ENCODE measurements at regions of chr16 and their contacts with region 1.

Region 1: DNA sequence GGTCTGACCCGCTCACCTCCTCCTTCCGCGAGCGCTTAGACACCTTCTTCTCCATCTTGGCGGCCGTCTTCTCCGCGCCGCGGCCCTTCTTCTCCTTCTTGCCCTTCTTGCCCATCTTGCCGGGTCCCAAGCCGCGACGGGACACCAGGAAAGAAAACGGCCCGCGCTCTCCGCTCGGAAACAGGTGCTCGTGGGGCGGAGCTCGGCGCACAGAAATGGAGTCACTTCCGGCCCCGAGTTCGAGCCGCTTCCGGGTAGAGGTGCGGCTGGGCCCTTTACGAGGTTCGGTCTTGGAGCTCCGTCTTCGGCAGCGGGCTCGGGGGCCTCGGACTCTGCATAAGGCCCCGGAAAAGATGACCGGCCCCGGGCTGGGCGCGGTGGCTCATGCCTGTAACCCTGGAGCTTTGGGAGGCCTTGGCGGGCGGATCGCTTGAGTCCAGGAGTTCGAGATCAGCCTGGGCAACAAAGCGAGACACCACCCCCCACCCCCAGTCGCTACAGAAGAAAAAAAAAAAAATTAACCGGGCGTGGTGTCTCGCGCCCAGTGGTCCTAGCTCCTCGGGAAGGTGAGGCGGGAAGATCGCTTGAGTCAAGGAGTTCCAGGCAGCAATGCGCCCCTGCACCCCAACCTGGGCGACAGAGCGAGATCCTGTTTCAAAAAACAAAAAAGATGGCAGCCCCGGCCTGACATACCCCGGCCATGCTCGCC is at the start of gene KLHDC4:
- DNase-seq: peak; percentile 84
- H3K4me3 Mint-ChIP-seq: peak within 1 kb of the TSS; percentile 88
- H3K27ac Mint-ChIP-seq: peak within 1 kb of the TSS; percentile 95
- H3K4me1 Mint-ChIP-seq: peaks cover 24% of the 10 kb centered on the region
- H3K27me3 Mint-ChIP-seq: no peaks in the 10 kb centered on the region
- CTCF ChIP-seq: no peak
- total RNA-seq, gene KLHDC4: 82.9 and 106 TPM in 2 replicates

Region 2: GRCh38 chr16:87160234-87160661 is 605.7 kb before region 1 on chr16:
- CTCF ChIA-PET with region 1: no interaction called
- POLR2A ChIA-PET with region 1: no interaction called
- intact Hi-C with region 1: no loop called
- DNase-seq: no peak
- H3K4me3 Mint-ChIP-seq: no peak overlapping the region
- H3K27ac Mint-ChIP-seq: no peak overlapping the region
- H3K4me1 Mint-ChIP-seq: peaks cover 23% of the 10 kb centered on the region
- H3K27me3 Mint-ChIP-seq: peaks cover 11% of the 10 kb centered on the region
- CTCF ChIP-seq: no peak

Region 3: DNA sequence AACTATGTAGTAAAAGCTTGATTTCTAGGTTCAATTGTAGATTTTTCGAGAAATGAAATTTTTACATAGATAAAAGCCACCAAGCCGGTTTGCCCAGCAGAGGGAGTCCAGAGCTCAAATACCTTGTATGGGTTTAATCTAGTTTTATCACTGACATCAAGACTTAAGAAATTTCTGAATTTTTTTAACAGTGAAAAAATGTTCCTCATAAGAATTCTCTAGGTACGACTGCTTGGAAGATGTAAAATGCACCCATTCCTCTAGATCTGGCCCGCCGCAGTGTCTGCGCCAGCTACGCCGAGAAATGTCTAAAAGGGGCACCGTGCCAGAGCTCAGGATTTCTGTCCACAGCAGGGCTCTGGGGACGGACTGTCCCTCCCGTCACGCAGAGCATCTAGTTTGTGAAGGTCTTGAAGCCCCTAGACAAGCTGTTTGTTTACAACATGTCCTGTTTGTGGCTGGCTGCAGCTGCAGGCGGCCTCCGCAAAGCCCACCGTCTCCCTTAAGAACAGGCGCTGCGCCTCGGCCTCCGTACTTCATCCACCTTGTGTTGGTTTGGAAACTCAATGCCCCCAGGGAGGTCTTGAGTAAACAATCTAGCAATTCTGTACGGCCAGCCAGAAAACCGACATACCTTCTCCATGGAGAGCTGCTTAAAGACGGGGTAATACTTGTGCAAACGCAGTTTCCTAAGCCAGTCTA is 349.0 kb before region 1 on chr16:
- CTCF ChIA-PET with region 1: no interaction called
- POLR2A ChIA-PET with region 1: no interaction called
- intact Hi-C with region 1: no loop called
- DNase-seq: peak; percentile 56
- H3K4me3 Mint-ChIP-seq: no peak overlapping the region
- H3K27ac Mint-ChIP-seq: no peak overlapping the region
- H3K4me1 Mint-ChIP-seq: no peaks in the 10 kb centered on the region
- H3K27me3 Mint-ChIP-seq: no peaks in the 10 kb centered on the region
- CTCF ChIP-seq: peak; percentile 52

Region 4: DNA sequence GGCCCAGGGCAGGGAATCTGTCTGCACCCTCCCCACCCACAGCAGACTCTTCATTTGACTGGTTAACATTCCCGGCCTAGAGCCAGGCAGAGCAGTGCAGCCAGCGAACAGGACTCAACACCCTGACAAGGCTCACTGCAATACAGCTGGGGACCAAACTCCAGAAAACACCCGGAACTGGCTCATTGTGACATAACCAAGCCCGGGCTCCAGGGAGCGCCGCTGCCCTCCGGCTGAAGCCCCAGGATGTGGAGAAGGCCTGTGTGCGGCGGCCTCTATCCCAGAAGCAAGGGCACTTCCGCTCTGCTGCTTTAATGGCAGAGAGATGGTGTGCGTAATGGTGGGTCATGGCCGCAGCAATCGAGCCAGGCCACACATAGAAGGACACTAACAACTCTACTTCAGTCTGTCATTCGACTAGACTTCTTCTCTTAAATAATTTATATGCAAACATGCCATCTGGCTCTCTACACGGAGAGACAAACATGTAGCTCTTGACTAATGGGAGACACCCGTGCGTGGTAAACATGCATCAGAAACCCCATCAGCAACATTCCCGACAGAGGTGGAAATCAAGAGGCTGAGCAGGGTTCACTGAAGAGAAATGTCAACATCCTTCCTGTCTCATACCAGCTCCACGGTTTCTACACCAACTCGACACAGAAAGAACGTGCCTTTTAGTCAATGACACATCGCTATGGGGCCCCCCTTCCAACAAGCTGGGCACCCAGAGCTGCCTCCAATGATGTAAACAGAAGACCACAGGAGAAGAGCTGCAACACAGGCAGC is 18.1 kb before region 1 on chr16:
- CTCF ChIA-PET with region 1: interaction called, 17 read pairs
- POLR2A ChIA-PET with region 1: interaction called, 20 read pairs
- intact Hi-C with region 1: no loop called
- DNase-seq: no peak
- H3K4me3 Mint-ChIP-seq: no peak overlapping the region
- H3K27ac Mint-ChIP-seq: no peak overlapping the region
- H3K4me1 Mint-ChIP-seq: peaks cover 6% of the 10 kb centered on the region
- H3K27me3 Mint-ChIP-seq: no peaks in the 10 kb centered on the region
- CTCF ChIP-seq: no peak

Region 5: GRCh38 chr16:87754535-87754934 is 11.4 kb before region 1 on chr16:
- CTCF ChIA-PET with region 1: interaction called, 17 read pairs
- POLR2A ChIA-PET with region 1: interaction called, 20 read pairs
- intact Hi-C with region 1: no loop called
- DNase-seq: no peak
- H3K4me3 Mint-ChIP-seq: no peak overlapping the region
- H3K27ac Mint-ChIP-seq: no peak overlapping the region
- H3K4me1 Mint-ChIP-seq: peaks cover 7% of the 10 kb centered on the region
- H3K27me3 Mint-ChIP-seq: no peaks in the 10 kb centered on the region
- CTCF ChIP-seq: no peak

Region 6: GRCh38 chr16:87818533-87819161 is 52.7 kb after region 1 on chr16:
- CTCF ChIA-PET with region 1: no interaction called
- POLR2A ChIA-PET with region 1: no interaction called
- intact Hi-C with region 1: no loop called
- DNase-seq: no peak
- H3K4me3 Mint-ChIP-seq: no peak overlapping the region
- H3K27ac Mint-ChIP-seq: no peak overlapping the region
- H3K4me1 Mint-ChIP-seq: peaks cover 5% of the 10 kb centered on the region
- H3K27me3 Mint-ChIP-seq: no peaks in the 10 kb centered on the region
- CTCF ChIP-seq: no peak

Region 7: GRCh38 chr16:87860553-87861299 is 94.8 kb after region 1 on chr16:
- CTCF ChIA-PET with region 1: interaction called, 5 read pairs
- POLR2A ChIA-PET with region 1: interaction called, 32 read pairs
- intact Hi-C with region 1: no loop called
- DNase-seq: peak; percentile 72
- H3K4me3 Mint-ChIP-seq: peak overlapping the region; percentile 67
- H3K27ac Mint-ChIP-seq: peak overlapping the region; percentile 75
- H3K4me1 Mint-ChIP-seq: peaks cover 38% of the 10 kb centered on the region
- H3K27me3 Mint-ChIP-seq: no peaks in the 10 kb centered on the region
- CTCF ChIP-seq: no peak

Region 8: GRCh38 chr16:87877938-87878507 is 112.1 kb after region 1 on chr16:
- CTCF ChIA-PET with region 1: interaction called, 26 read pairs
- POLR2A ChIA-PET with region 1: no interaction called
- intact Hi-C with region 1: no loop called
- DNase-seq: no peak
- H3K4me3 Mint-ChIP-seq: no peak overlapping the region
- H3K27ac Mint-ChIP-seq: no peak overlapping the region
- H3K4me1 Mint-ChIP-seq: no peaks in the 10 kb centered on the region
- H3K27me3 Mint-ChIP-seq: peaks cover 31% of the 10 kb centered on the region
- CTCF ChIP-seq: no peak

Region 9: DNA sequence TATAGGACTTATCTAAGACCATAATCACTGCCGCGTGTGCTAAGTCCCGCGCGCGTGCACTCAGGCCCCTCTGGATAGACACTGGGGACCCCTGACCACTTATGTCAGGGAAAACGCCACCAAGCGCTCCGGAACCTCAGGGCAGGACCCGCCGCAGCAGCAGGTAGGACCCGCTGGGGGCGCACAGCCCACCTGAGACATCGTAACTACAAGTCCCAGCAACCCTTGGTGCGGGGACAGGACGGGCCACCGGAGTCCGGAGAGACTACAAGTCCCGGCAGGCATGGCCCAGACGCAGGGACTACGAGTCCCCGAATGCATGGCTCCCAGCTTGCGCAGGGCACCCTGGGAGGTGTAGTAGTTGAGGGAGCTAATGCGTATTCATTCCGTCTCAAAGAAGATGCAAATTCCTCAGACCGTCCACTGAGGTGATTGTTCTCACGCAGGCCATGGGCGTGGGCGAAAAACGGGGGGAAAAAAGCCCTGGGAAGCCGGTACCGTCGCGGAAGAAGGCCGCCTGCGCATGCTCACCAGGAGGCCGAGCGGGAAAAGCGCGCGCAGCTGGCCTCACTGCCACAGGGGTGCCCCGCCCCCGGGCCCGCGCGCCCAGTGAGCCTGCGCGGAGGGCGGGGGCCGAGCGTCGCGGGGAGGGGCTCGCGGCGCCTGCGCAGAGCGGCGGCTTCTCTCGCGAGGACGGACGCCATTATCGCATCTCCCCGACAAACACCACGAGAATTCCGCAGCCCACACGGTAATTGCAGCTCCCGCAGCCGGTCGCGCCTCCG is 185.0 kb after region 1 on chr16 and contains the start of gene BANP:
- CTCF ChIA-PET with region 1: no interaction called
- POLR2A ChIA-PET with region 1: interaction called, 11 read pairs
- intact Hi-C with region 1: no loop called
- DNase-seq: peak; percentile 99
- H3K4me3 Mint-ChIP-seq: peak within 1 kb of the TSS; percentile 92
- H3K27ac Mint-ChIP-seq: peak within 1 kb of the TSS; percentile 97
- H3K4me1 Mint-ChIP-seq: peaks cover 21% of the 10 kb centered on the region
- H3K27me3 Mint-ChIP-seq: no peaks in the 10 kb centered on the region
- CTCF ChIP-seq: peak; percentile 27
- total RNA-seq, gene BANP: 38.2 and 41.5 TPM in 2 replicates

Measured in MCF 10A (cell line).